Naive thymus-derived CD4-positive, alpha-beta T cell (primary cell): ENCODE measurements at regions of chr6 and their contacts with region 1.

Region 1: DNA sequence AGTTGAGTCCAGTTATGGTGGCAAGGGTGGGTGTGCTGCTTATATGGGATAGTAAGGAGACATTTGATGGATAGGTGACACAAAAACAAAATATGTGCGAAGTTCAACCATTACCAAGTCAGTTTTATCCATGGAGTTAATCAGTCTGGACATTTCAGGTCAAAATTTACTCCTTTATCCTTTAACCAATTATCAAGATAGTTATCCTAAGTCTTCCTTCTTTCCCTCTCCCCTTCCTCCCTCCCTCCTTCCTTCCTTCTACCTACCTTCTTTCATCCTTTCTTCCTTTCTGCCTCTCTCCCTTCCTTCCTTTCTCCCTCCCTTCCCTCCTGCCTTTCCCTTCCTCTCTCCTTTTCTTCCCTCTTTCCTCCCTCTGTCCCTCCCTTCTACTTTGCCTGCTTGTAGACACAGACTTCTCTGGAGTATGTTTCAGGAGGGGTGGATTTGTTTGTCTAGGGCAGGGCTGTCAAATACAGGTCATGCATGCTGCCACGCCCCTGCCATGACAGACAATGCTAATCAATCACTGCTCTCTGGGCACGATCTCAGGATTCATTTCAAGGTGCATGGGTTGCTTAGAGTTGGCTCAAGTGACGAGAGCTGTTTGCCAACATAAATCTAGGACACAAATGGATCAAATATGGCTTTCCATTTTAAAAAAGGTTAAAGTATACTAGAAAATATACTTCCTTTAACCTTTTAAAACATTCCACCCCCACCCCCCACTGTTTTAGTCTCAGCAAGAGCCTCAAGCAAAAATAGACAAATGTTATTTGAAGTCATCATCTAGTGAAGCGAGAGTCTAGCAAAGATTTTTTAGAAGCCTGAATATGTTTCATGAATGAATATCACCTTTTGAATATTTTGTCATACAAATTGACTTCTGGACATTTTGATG is 281.6 kb upstream of the CITED2 start:
- DNase-seq: no peak
- ATAC-seq: no peak
- H3K4me3 ChIP-seq: no peak overlapping the region
- H3K4me3 Mint-ChIP-seq: no peak overlapping the region
- H3K27ac ChIP-seq: no peak overlapping the region
- H3K27ac Mint-ChIP-seq: no peak overlapping the region
- H3K4me1 ChIP-seq: no peaks in the 10 kb centered on the region
- H3K4me1 Mint-ChIP-seq: no peaks in the 10 kb centered on the region
- H3K27me3 ChIP-seq: no peaks in the 10 kb centered on the region
- H3K27me3 Mint-ChIP-seq: peaks cover 3 to 18% (median 7%) of the 10 kb centered on the region in 5 donors

Region 2: GRCh38 chr6:139612135-139612465 is 43.9 kb before region 1 on chr6:
- CTCF ChIA-PET with region 1: no interaction called
- POLR2A ChIA-PET with region 1: no interaction called
- intact Hi-C with region 1: loop called in 1 of 2 experiments (anchors 1 kb)
- DNase-seq: no peak
- ATAC-seq: no peak
- H3K4me3 ChIP-seq: no peak overlapping the region
- H3K4me3 Mint-ChIP-seq: no peak overlapping the region
- H3K27ac ChIP-seq: no peak overlapping the region
- H3K27ac Mint-ChIP-seq: no peak overlapping the region
- H3K4me1 ChIP-seq: no peaks in the 10 kb centered on the region
- H3K4me1 Mint-ChIP-seq: peaks cover 0 to 3% (median 0%) of the 10 kb centered on the region in 7 donors
- H3K27me3 ChIP-seq: no peaks in the 10 kb centered on the region
- H3K27me3 Mint-ChIP-seq: peaks cover 0 to 23% (median 5%) of the 10 kb centered on the region in 5 donors

Region 3: DNA sequence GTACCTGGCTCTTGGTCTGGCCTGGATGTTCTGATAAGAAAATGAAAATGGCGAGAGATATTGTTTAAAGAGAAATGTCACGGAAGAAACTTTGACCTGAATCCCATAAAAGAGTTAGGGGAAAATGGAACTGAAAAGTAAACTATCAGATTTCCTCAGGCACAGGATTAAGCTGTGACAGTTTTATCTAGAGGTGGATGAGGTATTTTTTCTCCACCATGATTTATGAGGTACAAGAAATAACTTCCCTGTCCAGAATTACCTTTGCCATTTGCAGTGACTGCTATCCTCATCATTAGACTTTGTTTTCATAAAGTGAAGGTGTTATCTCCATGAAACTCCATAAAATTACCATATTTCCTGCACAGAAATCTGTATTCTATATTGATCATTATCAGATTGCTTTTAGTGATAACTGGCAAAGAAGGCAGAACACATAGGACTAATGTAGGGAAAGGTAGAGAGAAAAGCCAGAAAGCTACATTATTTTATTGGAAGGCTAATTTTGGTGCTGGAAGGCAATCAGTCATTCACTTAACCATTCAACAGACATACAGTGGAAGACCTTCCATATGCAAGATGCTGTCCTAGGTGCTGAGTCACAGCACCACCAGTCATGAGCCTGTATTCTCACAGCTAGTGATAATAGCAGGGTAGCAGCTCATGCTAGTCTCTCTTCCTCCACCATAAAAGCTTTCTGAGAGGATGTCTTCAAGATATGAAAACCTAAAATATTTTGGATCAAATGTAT is 145.7 kb after region 1 on chr6:
- CTCF ChIA-PET with region 1: no interaction called
- POLR2A ChIA-PET with region 1: no interaction called
- intact Hi-C with region 1: no loop called
- DNase-seq: no peak
- ATAC-seq: no peak
- H3K4me3 ChIP-seq: no peak overlapping the region
- H3K4me3 Mint-ChIP-seq: no peak overlapping the region
- H3K27ac ChIP-seq: no peak overlapping the region
- H3K27ac Mint-ChIP-seq: no peak overlapping the region
- H3K4me1 ChIP-seq: no peaks in the 10 kb centered on the region
- H3K4me1 Mint-ChIP-seq: no peaks in the 10 kb centered on the region
- H3K27me3 ChIP-seq: no peaks in the 10 kb centered on the region
- H3K27me3 Mint-ChIP-seq: peaks cover 2 to 38% (median 23%) of the 10 kb centered on the region in 5 donors